ENCODE measurements at regions of chr2 and their contacts with region 1.

Region 1: DNA sequence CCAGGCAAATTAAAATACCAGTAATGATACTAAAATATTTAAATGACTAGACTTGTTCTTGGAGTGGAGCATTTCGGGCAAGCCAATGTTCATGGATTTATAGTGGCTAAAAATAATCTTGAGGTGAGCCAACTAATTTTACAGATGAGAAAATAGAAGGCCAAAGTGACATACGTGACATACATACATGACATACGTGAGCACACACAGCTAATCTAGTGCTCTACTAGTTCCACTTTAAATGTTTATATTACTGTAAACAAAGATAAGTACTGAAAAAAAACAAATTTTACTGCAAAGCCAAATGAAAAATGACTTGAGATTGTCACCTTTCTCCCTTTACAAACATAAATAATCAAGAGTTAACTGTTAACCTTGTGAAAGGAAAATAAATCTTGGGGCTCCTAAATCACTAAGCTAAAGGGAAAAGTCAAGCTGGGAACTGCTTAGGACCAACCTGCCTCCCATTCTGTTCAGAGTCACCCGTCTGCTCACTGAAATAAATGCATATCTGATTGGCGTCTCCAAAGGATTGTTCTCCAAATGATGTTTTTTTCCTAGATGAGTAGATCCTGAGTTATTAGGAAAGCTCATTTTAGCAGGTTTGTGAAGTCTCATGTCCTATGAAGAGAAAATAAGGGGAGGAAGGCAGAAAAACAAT is 96.7 kb downstream of the PMS1 start:
- DNase-seq: no peak
- ATAC-seq: no peak
- H3K4me3 ChIP-seq: no peak overlapping the region
- H3K4me3 Mint-ChIP-seq: no peak overlapping the region
- H3K27ac ChIP-seq: no peak overlapping the region
- H3K27ac Mint-ChIP-seq: no peak overlapping the region
- H3K4me1 ChIP-seq: no peaks in the 10 kb centered on the region
- H3K4me1 Mint-ChIP-seq: no peaks in the 10 kb centered on the region
- H3K27me3 ChIP-seq: no peaks in the 10 kb centered on the region
- H3K27me3 Mint-ChIP-seq: no peaks in the 10 kb centered on the region

Region 2: GRCh38 chr2:189835855-189836558 is 45.0 kb before region 1 on chr2:
- CTCF ChIA-PET with region 1: no interaction called
- POLR2A ChIA-PET with region 1: interaction called in 1 of 2 experiments, 12 read pairs
- DNase-seq: no peak
- ATAC-seq: no peak
- H3K4me3 ChIP-seq: no peak overlapping the region
- H3K4me3 Mint-ChIP-seq: no peak overlapping the region
- H3K27ac ChIP-seq: no peak overlapping the region
- H3K27ac Mint-ChIP-seq: no peak overlapping the region
- H3K4me1 ChIP-seq: no peaks in the 10 kb centered on the region
- H3K4me1 Mint-ChIP-seq: peaks cover 0 to 3% (median 0%) of the 10 kb centered on the region in 3 donors
- H3K27me3 ChIP-seq: no peaks in the 10 kb centered on the region
- H3K27me3 Mint-ChIP-seq: no peaks in the 10 kb centered on the region